Naive thymus-derived CD8-positive, alpha-beta T cell (primary cell): ENCODE measurements at regions of chr19 and their contacts with region 1.

Region 1: DNA sequence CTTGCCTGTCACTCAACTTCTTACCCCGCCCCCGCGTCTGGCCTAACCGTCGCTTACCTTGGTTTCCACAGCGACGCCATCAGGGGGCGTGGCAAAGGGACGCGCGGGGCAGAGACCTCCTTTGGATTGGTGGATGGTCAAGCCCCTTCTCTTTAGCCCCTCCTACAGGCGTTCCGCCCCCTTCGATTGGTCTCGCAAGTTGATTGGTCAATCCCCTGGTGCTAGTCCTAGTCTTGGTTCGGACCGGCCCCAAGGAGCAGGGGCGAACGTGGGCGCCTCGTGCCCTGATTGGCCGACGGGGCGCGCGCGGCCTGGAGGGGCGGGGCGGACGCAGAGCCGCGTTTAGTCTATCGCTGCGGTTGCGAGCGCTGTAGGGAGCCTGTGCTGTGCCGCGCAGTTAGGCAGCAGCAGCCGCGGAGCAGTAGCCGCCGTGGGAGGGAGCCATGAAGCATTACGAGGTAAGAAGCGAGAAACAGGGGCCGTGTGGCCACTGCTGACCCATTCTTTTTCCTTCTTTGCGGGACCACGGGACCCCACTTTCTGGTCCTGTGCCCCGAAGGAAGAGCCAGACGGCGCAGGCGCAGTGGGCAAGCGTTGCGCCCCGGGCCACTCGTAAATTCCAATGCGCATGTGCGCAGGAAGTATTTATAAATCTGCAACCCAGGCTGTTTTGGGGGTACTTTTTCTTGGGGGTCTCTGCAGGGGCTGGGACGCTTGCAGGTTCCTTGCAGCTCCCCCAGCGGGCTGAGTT is at the start of gene TECR:
- DNase-seq: peak; percentile 98 to 100 (median 100)
- ATAC-seq: peak; percentile 90 to 91
- H3K4me3 Mint-ChIP-seq: peak within 1 kb of the TSS; percentile 91 to 99 (median 96)
- H3K27ac Mint-ChIP-seq: peak within 1 kb of the TSS; percentile 95 to 100 (median 100)
- H3K4me1 Mint-ChIP-seq: peaks cover 12 to 67% (median 40%) of the 10 kb centered on the region in 4 donors
- H3K27me3 Mint-ChIP-seq: peaks cover 0 to 2% (median 0%) of the 10 kb centered on the region in 5 donors
- polyA plus RNA-seq, gene TECR: 193 to 300 (median 261) TPM

Region 2: DNA sequence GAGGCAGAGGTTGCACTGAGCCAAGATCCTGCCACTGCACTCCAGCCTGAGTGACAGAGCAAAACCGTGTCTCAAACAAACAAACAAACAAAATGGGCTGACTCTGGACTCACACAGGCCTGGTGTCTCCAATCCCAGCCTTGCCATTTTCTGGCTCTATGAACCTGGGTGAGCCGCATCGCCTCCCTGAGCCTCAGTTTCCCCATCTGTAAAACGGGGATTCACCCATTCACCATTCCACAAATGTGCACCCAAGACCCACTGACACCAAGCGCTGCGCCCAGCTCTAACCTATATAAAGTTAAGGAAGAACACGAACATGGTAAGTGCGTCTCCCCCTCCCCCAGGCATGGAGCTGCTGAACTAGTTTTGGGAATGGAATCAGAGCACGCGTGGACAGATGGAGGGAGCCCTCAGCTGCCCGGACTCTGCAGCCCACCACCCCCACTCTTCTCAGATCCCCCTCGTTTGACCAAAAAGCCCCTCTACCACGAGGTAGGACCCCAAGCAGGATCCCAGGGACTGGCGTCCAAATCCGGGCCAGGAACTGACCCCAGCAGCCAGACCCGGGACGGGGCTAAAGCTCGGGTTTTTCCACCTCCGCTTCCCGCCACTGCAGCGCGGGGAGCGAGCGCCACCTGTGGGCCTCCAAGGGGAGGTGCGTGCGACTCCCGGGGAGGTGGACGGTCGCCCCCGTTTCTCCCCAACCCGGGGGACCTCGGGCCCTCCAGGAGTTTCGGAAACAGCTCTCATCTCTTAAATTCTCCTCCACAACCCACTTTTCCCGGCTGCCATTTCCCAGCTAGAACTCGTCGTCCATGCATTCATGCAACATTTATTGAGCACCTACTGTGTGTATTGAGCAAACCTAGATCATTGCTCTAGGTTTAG is 181.2 kb before region 1 on chr19:
- POLR2A ChIA-PET with region 1: no interaction called
- DNase-seq: peak; percentile 34 to 77 (median 66)
- ATAC-seq: peak; percentile 79 to 82
- H3K4me3 Mint-ChIP-seq: peak overlapping the region; percentile 44 to 72 (median 60)
- H3K27ac Mint-ChIP-seq: peak overlapping the region in 7 of 10 donors; percentile 18 to 62 (median 27)
- H3K4me1 Mint-ChIP-seq: peaks cover 3 to 28% (median 15%) of the 10 kb centered on the region in 4 donors
- H3K27me3 Mint-ChIP-seq: no peaks in the 10 kb centered on the region

Region 3: GRCh38 chr19:14496028-14496833 is 33.2 kb before region 1 on chr19 and contains the start of gene GIPC1:
- POLR2A ChIA-PET with region 1: interaction called, 14 read pairs
- DNase-seq: peak; percentile 66 to 94 (median 81)
- ATAC-seq: peak; percentile 91 to 92
- H3K4me3 Mint-ChIP-seq: peak within 1 kb of the TSS; percentile 78 to 91 (median 86)
- H3K27ac Mint-ChIP-seq: peak within 1 kb of the TSS; percentile 57 to 91 (median 88)
- H3K4me1 Mint-ChIP-seq: peaks cover 13 to 34% (median 25%) of the 10 kb centered on the region in 4 donors
- H3K27me3 Mint-ChIP-seq: no peaks in the 10 kb centered on the region
- polyA plus RNA-seq, gene GIPC1: 32.2 to 35.0 (median 33.5) TPM

Region 4: GRCh38 chr19:14550201-14550784 is 20.9 kb after region 1 on chr19:
- POLR2A ChIA-PET with region 1: interaction called, 26 read pairs
- DNase-seq: no peak
- ATAC-seq: no peak
- H3K4me3 Mint-ChIP-seq: peak overlapping the region in 2 of 10 donors; percentile 62 to 64
- H3K27ac Mint-ChIP-seq: peak overlapping the region in 9 of 10 donors; percentile 83 to 95 (median 94)
- H3K4me1 Mint-ChIP-seq: peaks cover 18 to 64% (median 49%) of the 10 kb centered on the region in 4 donors
- H3K27me3 Mint-ChIP-seq: no peaks in the 10 kb centered on the region

Region 5: DNA sequence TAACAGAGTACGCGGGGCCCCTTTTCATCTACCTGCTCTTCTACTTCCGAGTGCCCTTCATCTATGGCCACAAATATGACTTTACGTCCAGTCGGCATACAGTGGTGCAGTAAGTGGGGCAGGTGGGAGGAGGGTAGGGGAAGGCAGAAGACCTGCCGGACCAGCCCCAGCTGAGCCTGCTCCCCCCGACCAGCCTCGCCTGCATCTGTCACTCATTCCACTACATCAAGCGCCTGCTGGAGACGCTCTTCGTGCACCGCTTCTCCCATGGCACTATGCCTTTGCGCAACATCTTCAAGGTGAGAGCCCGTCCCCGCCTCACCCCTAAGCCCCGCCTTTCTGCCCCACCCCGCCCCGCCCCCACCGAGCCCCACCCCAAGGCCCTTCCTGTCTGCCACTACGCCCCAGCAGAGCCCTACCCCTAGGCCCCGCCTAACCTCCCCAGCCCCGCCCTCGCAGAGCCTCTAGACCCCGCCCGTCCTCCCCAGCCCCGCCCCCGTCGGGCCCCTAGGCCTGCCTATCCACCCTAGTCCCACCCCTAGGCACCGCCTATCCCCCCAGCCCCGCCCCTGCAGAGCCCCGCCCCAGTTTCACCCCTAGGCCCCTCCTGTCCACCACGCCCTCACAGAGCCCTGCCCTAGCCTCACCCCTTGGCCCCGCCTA is 34.7 kb after region 1 on chr19:
- POLR2A ChIA-PET with region 1: no interaction called
- DNase-seq: peak in 5 of 10 donors; percentile 16 to 44 (median 34)
- ATAC-seq: peak; percentile 34 to 65
- H3K4me3 Mint-ChIP-seq: peak overlapping the region in 1 of 10 donors; percentile 53
- H3K27ac Mint-ChIP-seq: peak overlapping the region in 5 of 10 donors; percentile 24 to 69 (median 49)
- H3K4me1 Mint-ChIP-seq: peaks cover 27 to 52% (median 35%) of the 10 kb centered on the region in 4 donors
- H3K27me3 Mint-ChIP-seq: no peaks in the 10 kb centered on the region